PC-9 (cell line): ENCODE measurements at regions of chr3 and their contacts with region 1.

Region 1: DNA sequence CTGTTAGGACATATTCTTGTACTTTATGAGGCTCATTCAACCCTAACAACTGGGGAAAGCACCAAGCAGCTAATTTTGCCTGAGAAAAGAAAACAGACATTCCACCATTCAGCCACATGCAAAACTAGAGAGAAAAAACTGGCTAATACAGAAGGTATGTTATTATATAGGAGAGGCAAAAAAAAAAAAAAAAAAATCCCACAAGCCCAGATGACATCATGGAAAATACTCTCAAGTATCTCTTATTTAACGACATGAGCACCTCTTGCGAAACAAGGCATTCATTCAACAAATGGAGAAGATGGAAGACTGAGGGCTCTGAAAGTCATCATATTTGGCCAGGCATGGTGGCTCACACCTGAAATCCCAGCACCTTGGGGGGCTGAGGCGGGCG is 61.5 kb downstream of the PRICKLE2 start:
- DNase-seq: peak in 1 of 2 experiments; percentile 77
- H3K4me3 ChIP-seq: no peak overlapping the region
- H3K27ac ChIP-seq: no peak overlapping the region
- H3K4me1 ChIP-seq: peaks cover 24% of the 10 kb centered on the region
- H3K27me3 ChIP-seq: no peaks in the 10 kb centered on the region
- CTCF ChIP-seq: no peak

Region 2: DNA sequence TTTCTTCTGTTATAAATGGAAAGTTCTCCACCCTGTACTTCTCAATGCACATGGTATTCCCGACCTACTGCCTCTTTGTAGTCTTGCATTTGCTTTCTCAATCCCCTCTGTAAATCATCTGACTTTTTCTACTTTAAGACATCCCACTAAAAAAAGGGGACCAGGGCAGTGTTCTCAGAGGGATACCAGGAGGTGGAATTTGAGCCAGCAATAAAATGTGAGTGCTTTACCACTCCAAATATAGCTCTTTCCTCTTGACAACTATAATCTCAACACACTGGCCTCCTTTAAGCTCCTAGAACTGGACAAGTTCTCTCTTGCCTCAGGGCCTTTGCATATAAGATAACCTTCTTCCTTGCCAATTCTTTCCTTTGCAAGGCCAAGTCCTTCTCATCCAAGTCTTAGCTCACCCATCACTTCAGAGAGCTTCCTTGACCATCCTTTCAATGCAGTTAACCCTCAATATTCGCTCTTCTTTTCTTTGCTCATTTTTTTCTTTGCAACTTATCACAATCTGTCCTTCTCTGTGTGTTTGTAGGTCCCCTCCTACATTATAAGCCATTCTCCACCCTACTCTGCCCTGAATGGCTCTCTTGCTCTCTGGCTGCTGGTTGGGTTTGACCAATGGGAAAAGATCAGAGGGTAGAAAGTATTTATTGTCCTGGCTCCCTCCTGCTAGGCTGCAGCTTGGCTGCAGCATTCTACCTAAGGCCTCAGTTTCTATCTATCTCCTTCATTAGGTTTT is 31.9 kb before region 1 on chr3:
- CTCF ChIA-PET with region 1: no interaction called
- POLR2A ChIA-PET with region 1: no interaction called
- intact Hi-C with region 1: no loop called
- DNase-seq: no peak
- H3K4me3 ChIP-seq: no peak overlapping the region
- H3K27ac ChIP-seq: no peak overlapping the region
- H3K4me1 ChIP-seq: no peaks in the 10 kb centered on the region
- H3K27me3 ChIP-seq: no peaks in the 10 kb centered on the region
- CTCF ChIP-seq: no peak

Region 3: GRCh38 chr3:64150623-64151207 is 13.0 kb before region 1 on chr3:
- CTCF ChIA-PET with region 1: interaction called, 13 read pairs
- POLR2A ChIA-PET with region 1: interaction called, 4 read pairs
- intact Hi-C with region 1: no loop called
- DNase-seq: peak in 1 of 2 experiments; percentile 32
- H3K4me3 ChIP-seq: no peak overlapping the region
- H3K27ac ChIP-seq: no peak overlapping the region
- H3K4me1 ChIP-seq: no peaks in the 10 kb centered on the region
- H3K27me3 ChIP-seq: no peaks in the 10 kb centered on the region
- CTCF ChIP-seq: no peak

Region 4: GRCh38 chr3:64187065-64187959 is 23.6 kb after region 1 on chr3:
- CTCF ChIA-PET with region 1: interaction called, 12 read pairs
- POLR2A ChIA-PET with region 1: no interaction called
- intact Hi-C with region 1: loop called (anchors 1 kb)
- DNase-seq: peak; percentile 46 to 68
- H3K4me3 ChIP-seq: no peak overlapping the region
- H3K27ac ChIP-seq: peak overlapping the region; percentile 29; the same call in 1 of the 2 replicates
- H3K4me1 ChIP-seq: peaks cover 50% of the 10 kb centered on the region
- H3K27me3 ChIP-seq: no peaks in the 10 kb centered on the region
- CTCF ChIP-seq: no peak